ENCODE measurements at regions of chr7 and their contacts with region 1.

Region 1: DNA sequence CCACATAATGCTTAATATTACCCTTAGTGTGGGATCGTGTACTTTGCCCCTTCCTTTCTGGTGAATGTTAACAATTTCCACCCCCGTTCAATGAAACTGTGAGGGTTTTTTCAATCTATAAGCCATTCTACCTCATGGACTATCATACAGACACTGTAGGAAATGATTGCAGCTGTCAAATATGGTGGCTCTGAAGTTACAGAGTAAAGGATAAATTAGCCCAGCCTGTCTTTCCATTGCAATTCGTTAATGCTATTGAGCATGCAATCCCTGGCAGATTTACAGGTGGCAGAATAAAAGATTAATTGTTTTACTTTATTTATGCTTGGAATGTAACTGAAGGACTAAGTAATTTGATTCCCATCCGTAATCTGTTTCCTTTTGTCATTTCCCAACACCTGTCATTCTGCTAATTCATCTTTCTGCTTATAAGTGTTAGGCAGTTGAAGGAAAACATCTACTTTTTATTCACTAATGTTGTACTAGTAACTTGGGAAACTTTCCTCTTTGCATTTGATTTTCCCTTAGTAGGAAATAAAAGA is 1211.6 kb upstream of the LRRN3 start:
- DNase-seq: no peak
- H3K4me3 ChIP-seq: no peak overlapping the region
- H3K4me3 Mint-ChIP-seq: no peak overlapping the region
- H3K27ac Mint-ChIP-seq: no peak overlapping the region
- H3K4me1 ChIP-seq: peaks cover 7% of the 10 kb centered on the region
- H3K4me1 Mint-ChIP-seq: peaks cover 8% of the 10 kb centered on the region
- H3K27me3 ChIP-seq: no peaks in the 10 kb centered on the region
- H3K27me3 Mint-ChIP-seq: no peaks in the 10 kb centered on the region
- CTCF ChIP-seq: no peak

Region 2: DNA sequence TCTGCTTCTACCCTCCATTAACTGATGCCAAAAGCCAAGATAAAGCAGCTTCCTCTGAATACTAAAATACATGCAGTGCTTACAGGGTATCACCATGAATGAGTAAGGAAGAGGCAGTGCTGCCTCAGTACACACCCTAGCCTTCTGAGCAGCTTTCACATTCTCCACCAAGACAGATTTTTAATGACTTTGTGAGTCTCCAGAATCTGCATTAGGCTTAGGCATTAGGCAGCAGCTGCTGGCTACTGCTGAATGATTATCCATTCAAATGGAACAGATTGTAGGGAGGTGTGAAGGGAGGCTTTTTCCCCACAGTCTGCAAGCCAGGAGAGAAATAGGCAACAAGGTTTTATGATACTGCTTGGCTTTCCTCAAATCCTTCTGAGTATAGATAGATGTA is 15.1 kb before region 1 on chr7:
- CTCF ChIA-PET with region 1: no interaction called
- POLR2A ChIA-PET with region 1: no interaction called
- intact Hi-C with region 1: no loop called
- DNase-seq: no peak
- H3K4me3 ChIP-seq: no peak overlapping the region
- H3K4me3 Mint-ChIP-seq: no peak overlapping the region
- H3K27ac Mint-ChIP-seq: no peak overlapping the region
- H3K4me1 ChIP-seq: peaks cover 6% of the 10 kb centered on the region
- H3K4me1 Mint-ChIP-seq: peaks cover 17% of the 10 kb centered on the region
- H3K27me3 ChIP-seq: no peaks in the 10 kb centered on the region
- H3K27me3 Mint-ChIP-seq: no peaks in the 10 kb centered on the region
- CTCF ChIP-seq: no peak

Region 3: DNA sequence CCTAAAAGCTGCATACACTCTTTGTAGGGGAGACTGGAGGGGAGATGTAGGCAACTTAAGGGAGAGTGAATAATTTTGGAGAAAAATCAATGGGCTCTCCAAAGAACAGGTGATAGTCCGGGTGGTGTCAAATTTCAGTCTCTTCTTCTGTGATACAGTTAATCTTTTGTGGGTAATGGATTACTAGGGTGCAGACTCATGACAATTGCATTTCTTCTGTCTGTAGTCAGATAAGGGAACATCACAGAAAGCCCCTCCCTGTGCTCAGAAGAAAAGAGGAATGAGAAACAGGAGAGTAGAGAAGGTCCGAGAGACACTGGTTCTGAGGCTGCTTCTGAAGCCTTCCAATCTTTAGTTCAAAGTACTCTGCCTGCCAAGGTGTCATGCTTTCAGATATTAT is 70.9 kb after region 1 on chr7:
- CTCF ChIA-PET with region 1: no interaction called
- POLR2A ChIA-PET with region 1: no interaction called
- intact Hi-C with region 1: loop called (anchors 5 kb)
- DNase-seq: peak in 1 of 2 experiments; percentile 32
- H3K4me3 ChIP-seq: no peak overlapping the region
- H3K4me3 Mint-ChIP-seq: peak overlapping the region; percentile 37
- H3K27ac Mint-ChIP-seq: peak overlapping the region; percentile 24
- H3K4me1 ChIP-seq: peaks cover 17% of the 10 kb centered on the region
- H3K4me1 Mint-ChIP-seq: no peaks in the 10 kb centered on the region
- H3K27me3 ChIP-seq: no peaks in the 10 kb centered on the region
- H3K27me3 Mint-ChIP-seq: no peaks in the 10 kb centered on the region
- CTCF ChIP-seq: no peak

Region 4: DNA sequence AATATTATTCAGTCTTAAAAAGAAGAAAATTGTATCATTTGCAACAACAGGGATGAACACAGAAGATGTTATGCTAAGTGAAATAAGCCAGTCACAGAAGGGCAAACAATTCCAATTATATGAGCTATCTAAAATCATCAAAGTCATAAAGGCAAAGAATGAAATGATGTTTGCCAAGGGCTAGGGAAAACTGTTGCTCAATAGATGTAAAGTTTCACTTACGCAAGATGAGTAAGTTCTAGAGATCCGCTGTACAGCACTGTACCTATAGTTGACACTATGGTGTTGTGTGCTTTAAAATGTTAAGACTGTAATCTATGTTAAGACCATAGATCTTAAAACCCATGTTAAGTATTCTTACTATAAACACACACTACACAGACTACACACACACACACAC is 307.0 kb after region 1 on chr7:
- CTCF ChIA-PET with region 1: no interaction called
- POLR2A ChIA-PET with region 1: no interaction called
- intact Hi-C with region 1: loop called (anchors 1 kb)
- DNase-seq: peak in 1 of 2 experiments; percentile 57
- H3K4me3 ChIP-seq: no peak overlapping the region
- H3K4me3 Mint-ChIP-seq: no peak overlapping the region
- H3K27ac Mint-ChIP-seq: no peak overlapping the region
- H3K4me1 ChIP-seq: peaks cover 10% of the 10 kb centered on the region
- H3K4me1 Mint-ChIP-seq: no peaks in the 10 kb centered on the region
- H3K27me3 ChIP-seq: no peaks in the 10 kb centered on the region
- H3K27me3 Mint-ChIP-seq: no peaks in the 10 kb centered on the region
- CTCF ChIP-seq: no peak

Region 5: DNA sequence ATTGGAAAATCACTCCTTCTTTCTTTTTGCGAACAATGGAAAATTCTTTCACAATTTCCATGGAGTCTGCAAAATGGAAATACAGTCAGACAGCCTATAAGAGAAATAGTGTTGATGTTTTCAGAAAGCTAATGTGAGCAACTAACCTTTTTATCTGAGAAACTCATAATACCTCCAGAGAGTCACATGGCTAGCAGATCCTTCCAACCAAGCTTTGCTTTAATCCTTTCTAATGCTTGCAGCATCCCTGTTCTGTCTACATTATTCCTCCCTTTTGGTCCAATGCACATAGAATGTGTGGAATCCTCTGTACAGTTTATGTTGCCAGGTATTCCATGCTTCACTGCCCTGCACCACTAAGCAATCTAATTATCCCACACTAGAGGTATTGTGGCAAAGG is 494.1 kb after region 1 on chr7:
- CTCF ChIA-PET with region 1: no interaction called
- POLR2A ChIA-PET with region 1: no interaction called
- intact Hi-C with region 1: loop called (anchors 2 kb)
- DNase-seq: no peak
- H3K4me3 ChIP-seq: no peak overlapping the region
- H3K4me3 Mint-ChIP-seq: no peak overlapping the region
- H3K27ac Mint-ChIP-seq: peak overlapping the region; percentile 70
- H3K4me1 ChIP-seq: peaks cover 17% of the 10 kb centered on the region
- H3K4me1 Mint-ChIP-seq: peaks cover 18% of the 10 kb centered on the region
- H3K27me3 ChIP-seq: no peaks in the 10 kb centered on the region
- H3K27me3 Mint-ChIP-seq: no peaks in the 10 kb centered on the region
- CTCF ChIP-seq: no peak